HEK293 (cell line): ENCODE measurements at regions of chr3 and their contacts with region 1.

Region 1: DNA sequence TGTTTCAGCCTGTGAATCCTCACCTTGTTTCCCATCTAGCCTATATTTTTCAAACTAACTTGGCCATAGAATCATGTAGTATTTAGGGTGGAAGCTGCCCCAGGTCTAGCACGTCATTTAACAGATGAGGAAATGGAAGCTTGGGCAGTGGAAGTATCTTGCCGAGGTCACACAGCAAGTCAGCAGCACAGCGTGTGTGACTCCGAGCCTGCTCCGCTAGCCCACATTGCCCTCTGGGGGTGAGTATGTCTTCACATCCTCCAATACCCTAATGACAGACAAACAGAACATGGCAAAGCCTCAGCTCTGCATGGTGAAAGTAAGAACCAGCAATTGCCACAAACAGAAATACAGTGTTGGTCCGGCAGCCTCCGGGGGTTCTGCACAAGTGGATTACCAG is 2.2 kb upstream of the CCR5 start:
- H3K4me3 ChIP-seq: no peak overlapping the region
- H3K27ac ChIP-seq: no peak overlapping the region
- H3K4me1 ChIP-seq: no peaks in the 10 kb centered on the region
- CTCF ChIP-seq: 0 out of 2 replicates have a peak, but pooled peaks have one; percentile 17

Region 2: DNA sequence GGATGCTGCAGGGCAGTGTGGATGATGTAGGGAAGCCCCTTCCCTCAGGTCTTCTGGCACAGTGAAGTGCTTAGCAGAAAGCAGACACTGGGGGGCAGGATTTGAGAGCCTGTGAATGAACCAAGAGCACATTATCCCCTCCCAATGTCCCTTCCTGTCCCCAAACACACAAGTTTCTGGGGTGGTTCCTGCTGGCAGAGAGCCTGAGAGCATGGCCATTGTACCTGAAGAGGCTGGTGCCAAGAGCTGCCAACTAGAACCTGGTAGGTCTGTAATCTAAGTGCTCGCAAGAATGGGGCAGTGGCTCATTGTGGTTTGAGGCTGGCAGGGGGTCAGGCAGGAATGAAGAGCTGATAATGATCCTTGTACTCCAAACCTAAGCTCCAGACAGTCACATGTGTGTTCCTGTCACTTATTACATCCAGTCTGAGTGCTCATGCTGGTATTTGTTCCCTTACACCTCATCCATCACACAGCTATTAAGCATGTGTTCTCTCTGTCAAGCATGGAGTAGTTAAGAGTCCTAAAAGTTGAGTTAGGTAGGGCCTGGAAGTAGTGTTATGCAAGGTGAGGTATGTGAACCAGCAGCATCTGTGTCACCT is 153.7 kb before region 1 on chr3:
- CTCF ChIA-PET with region 1: interaction called, 21 read pairs
- POLR2A ChIA-PET with region 1: no interaction called
- H3K4me3 ChIP-seq: no peak overlapping the region
- H3K27ac ChIP-seq: no peak overlapping the region
- H3K4me1 ChIP-seq: no peaks in the 10 kb centered on the region
- CTCF ChIP-seq: no peak